Activated CD8-positive, alpha-beta memory T cell treated with anti-CD3 and anti-CD28 coated beads, Interleukin-2, amount 10 ng/mL, durations not matched to agents 7 days and 5 days (primary cell): ENCODE measurements at regions of chr1 and their contacts with region 1.

Region 1: GRCh38 chr1:32400876-32401631 is 6.8 kb upstream of the BSDC1 start:
- DNase-seq: peak; percentile 63
- ATAC-seq: peak; percentile 78
- H3K4me3 Mint-ChIP-seq: no peak overlapping the region
- H3K27ac Mint-ChIP-seq: no peak overlapping the region
- H3K4me1 Mint-ChIP-seq: no peaks in the 10 kb centered on the region
- H3K27me3 Mint-ChIP-seq: no peaks in the 10 kb centered on the region

Region 2: DNA sequence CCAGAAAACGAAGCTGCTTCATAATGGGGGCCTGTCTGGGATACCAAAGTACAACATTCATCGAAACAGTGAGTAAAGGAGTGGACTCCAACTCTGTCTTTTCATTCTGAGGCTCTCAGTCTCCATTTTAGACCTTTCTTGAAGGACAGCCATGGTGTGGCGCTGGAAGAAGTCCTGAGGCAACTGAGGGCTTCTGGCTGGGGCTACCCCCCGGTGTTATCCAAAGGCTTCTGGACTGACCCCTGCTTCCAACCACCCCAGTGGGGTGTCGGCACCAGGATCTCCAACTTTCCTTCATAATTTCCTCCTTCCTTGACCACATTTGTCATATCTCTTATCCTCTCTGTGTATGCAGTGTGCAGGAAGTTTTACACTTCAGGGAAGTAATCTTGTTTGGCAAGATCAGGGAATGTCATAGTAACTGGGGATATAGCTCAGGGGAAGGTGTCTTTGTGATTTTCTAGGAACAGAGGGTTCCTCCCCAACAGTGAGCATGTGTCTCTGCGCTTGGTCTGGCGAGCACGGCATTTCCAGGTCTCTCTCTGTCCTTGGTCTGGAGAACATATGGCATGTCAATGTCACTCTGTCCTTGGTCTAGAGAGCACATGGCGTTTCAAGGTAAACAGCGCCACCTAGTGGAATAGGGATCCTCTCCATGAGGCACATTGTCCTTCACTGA is 12.6 kb after region 1 on chr1:
- CTCF ChIA-PET with region 1: interaction called, 32 read pairs
- DNase-seq: peak; percentile 82
- ATAC-seq: peak; percentile 86
- H3K4me3 Mint-ChIP-seq: no peak overlapping the region
- H3K27ac Mint-ChIP-seq: peak overlapping the region; percentile 4
- H3K4me1 Mint-ChIP-seq: peaks cover 4% of the 10 kb centered on the region
- H3K27me3 Mint-ChIP-seq: peaks cover 25% of the 10 kb centered on the region

Region 3: DNA sequence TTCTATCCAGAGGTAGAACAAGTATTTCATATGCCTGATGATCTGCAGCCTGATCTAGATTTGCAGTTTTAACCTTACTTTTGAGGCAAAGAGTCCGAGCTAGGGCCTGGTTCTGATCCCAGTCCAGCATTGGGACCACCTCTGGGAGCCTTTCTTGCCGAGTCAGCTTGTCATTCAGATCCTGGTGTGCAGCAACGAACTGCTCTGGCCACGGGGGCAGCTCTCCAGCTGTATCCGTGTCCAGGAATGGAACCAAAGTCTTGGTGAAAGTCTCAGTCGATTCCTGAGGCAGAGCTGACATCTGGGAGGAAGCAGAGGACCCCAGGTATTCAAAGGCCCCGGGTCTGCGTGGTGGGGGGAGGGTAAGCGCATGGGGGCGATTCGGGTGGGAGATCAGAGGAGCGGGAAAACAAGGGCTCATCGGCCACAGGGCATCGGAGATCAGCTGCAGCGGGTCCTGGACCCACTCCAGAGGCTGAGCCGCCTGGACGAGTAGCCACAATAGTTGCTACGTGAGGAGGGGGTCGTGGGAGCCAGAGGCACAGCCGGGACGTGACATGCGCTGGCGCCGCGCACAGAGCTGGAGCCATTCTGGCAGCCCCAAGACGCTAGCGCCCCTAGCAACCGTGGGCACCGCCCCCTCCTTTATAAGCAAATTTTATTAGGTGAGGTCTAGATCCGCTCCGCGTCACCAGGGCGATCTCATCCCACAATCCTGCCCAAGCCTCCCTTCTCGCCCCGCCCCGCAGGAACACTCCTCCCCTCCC is 25.6 kb after region 1 on chr1:
- CTCF ChIA-PET with region 1: interaction called, 10 read pairs
- DNase-seq: no peak
- ATAC-seq: no peak
- H3K4me3 Mint-ChIP-seq: no peak overlapping the region
- H3K27ac Mint-ChIP-seq: no peak overlapping the region
- H3K4me1 Mint-ChIP-seq: no peaks in the 10 kb centered on the region
- H3K27me3 Mint-ChIP-seq: peaks cover 57% of the 10 kb centered on the region